Activated CD8-positive, alpha-beta T cell treated with anti-CD3 and anti-CD28 coated beads for 36 hours (primary cell): ENCODE measurements at regions of chr13 and their contacts with region 1.

Region 1: GRCh38 chr13:79393564-79394249 is 12.3 kb downstream of the RBM26 start:
- DNase-seq: peak; percentile 53
- ATAC-seq: peak; percentile 32
- H3K4me3 Mint-ChIP-seq: peak overlapping the region; percentile 57
- H3K27ac Mint-ChIP-seq: peak overlapping the region; percentile 81
- H3K4me1 Mint-ChIP-seq: peaks cover 71% of the 10 kb centered on the region
- H3K27me3 Mint-ChIP-seq: no peaks in the 10 kb centered on the region
- CTCF ChIP-seq: no peak

Region 2: GRCh38 chr13:79353693-79354092 is 40.0 kb before region 1 on chr13:
- CTCF ChIA-PET with region 1: interaction called, 8 read pairs
- POLR2A ChIA-PET with region 1: no interaction called
- intact Hi-C with region 1: loop called (anchors 5 kb)
- DNase-seq: no peak
- ATAC-seq: no peak
- H3K4me3 Mint-ChIP-seq: no peak overlapping the region
- H3K27ac Mint-ChIP-seq: peak overlapping the region; percentile 30
- H3K4me1 Mint-ChIP-seq: peaks cover 6% of the 10 kb centered on the region
- H3K27me3 Mint-ChIP-seq: no peaks in the 10 kb centered on the region
- CTCF ChIP-seq: no peak

Region 3: DNA sequence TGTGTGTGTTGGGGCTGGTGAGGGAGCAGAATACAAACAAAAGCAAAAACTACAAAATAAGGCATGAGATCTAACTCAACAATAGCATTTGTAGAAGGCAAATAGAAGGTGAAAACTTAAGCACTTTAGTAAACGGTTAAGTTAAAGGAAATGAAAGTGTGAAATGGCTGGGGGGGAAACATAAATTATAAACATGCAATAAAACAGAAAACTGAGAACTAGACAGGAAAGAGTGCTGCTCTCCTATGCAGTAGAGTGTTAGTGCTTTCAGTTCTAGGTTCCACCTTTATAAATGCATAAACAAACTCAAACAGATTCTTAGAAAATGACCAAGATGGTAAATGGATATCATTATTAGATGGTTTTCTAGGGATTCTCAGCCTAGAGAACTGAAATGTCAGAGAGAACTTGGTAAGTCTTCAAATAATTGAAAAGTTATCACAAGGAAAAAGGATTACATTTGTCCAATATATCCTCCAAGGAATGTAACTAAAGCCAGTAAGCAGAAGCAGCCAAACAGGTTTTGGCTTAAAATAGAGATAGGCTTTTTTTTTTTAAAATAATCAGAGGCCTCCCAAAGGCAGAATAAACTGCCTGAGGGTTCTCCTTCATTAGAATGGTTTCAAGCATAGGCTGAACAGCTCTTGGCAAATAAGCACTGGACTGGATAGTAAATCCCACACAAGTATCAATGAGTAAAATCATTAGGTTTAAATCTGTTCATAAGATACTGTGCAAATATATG is 11.0 kb before region 1 on chr13:
- CTCF ChIA-PET with region 1: interaction called, 27 read pairs
- POLR2A ChIA-PET with region 1: interaction called, 3 read pairs
- intact Hi-C with region 1: no loop called
- DNase-seq: no peak
- ATAC-seq: no peak
- H3K4me3 Mint-ChIP-seq: peak overlapping the region; percentile 33
- H3K27ac Mint-ChIP-seq: peak overlapping the region; percentile 79
- H3K4me1 Mint-ChIP-seq: peaks cover 76% of the 10 kb centered on the region
- H3K27me3 Mint-ChIP-seq: no peaks in the 10 kb centered on the region
- CTCF ChIP-seq: no peak

Region 4: GRCh38 chr13:79560953-79561352 is 167.2 kb after region 1 on chr13:
- CTCF ChIA-PET with region 1: no interaction called
- POLR2A ChIA-PET with region 1: no interaction called
- intact Hi-C with region 1: no loop called
- DNase-seq: no peak
- ATAC-seq: no peak
- H3K4me3 Mint-ChIP-seq: no peak overlapping the region
- H3K27ac Mint-ChIP-seq: no peak overlapping the region
- H3K4me1 Mint-ChIP-seq: no peaks in the 10 kb centered on the region
- H3K27me3 Mint-ChIP-seq: no peaks in the 10 kb centered on the region
- CTCF ChIP-seq: no peak